Left lung (tissue), 14 donors: ENCODE measurements at regions of chr2 and their contacts with region 1.

Region 1: GRCh38 chr2:105235388-105236054 is 6.0 kb upstream of the GPR45 start:
- DNase-seq: peak in 3 of 4 donors; percentile 57 to 77 (median 65)
- ATAC-seq: peak; percentile 77
- H3K4me3 ChIP-seq: no peak overlapping the region
- H3K27ac ChIP-seq: no peak overlapping the region
- H3K4me1 ChIP-seq: peaks cover 0 to 8% of the 10 kb centered on the region in 2 donors
- H3K27me3 ChIP-seq: peaks cover 0 to 18% of the 10 kb centered on the region in 2 donors
- CTCF ChIP-seq: peak; percentile 58 to 81

Region 2: GRCh38 chr2:105114551-105114950 is 121.0 kb before region 1 on chr2:
- intact Hi-C with region 1: loop called in 1 of 2 experiments (anchors 5 kb)
- DNase-seq: peak in 2 of 4 donors; percentile 23 to 53
- ATAC-seq: peak; percentile 63
- H3K4me3 ChIP-seq: no peak overlapping the region
- H3K27ac ChIP-seq: no peak overlapping the region
- H3K4me1 ChIP-seq: no peaks in the 10 kb centered on the region
- H3K27me3 ChIP-seq: no peaks in the 10 kb centered on the region
- CTCF ChIP-seq: peak; percentile 43 to 64